CD4-positive, alpha-beta T cell (primary cell): ENCODE measurements at regions of chr4 and their contacts with region 1.

Region 1: DNA sequence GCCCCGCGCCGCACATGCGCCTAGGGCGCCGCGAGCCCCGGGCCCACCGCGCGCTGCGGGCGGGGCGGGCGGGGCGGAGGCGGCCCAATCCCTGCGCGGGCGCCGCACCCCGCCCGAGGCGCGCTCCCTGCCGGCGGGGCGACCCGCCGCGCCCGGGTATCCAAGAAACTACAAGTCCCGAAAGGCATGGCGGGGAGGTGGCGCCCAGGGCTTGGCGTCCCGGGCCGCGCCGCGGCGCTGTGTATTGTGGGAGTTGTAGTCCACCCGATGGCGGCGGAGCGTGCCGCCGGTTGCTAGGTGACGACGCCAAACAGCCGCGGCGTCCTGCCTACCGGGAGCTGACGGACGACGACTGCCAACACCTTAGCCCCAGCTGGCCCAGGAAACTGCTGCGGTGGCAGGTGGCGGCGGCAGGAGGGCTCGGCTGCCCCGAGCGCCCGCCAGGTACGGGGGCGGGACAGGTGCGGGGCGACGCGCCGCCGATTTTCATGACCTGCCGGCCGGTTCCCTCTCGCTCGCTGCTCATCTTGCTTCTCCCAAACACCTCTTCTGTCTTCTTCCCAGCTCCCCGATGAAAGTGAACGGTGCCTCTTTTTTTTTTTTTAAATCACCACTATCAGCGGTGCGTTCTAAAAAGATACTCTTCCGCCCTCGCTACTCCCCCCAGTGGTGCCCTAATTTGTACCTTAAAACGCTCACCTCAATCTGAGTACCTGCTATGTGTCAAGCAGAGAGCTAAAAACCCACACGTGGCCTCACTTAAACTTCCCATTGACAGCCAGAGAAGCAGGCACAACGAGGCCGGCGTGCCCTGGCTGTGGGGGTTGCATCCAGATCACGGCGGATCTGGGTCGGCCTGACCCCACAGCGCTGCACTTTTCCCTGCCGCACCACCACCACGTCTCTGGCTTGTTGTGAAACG is at the start of gene CFAP99:
- DNase-seq: peak; percentile 98 to 99 (median 99)
- ATAC-seq: peak; percentile 86
- H3K4me3 ChIP-seq: peak within 1 kb of the TSS; percentile 75
- H3K4me3 Mint-ChIP-seq: peak within 1 kb of the TSS; percentile 91
- H3K27ac ChIP-seq: peak within 1 kb of the TSS; percentile 43 to 88
- H3K27ac Mint-ChIP-seq: peak within 1 kb of the TSS; percentile 80
- H3K4me1 ChIP-seq: peaks cover 49% of the 10 kb centered on the region
- H3K4me1 Mint-ChIP-seq: peaks cover 39% of the 10 kb centered on the region
- H3K27me3 ChIP-seq: peaks cover 9 to 11% of the 10 kb centered on the region in 2 experiments
- H3K27me3 Mint-ChIP-seq: peaks cover 31% of the 10 kb centered on the region
- CTCF ChIP-seq: peak; percentile 52
- total RNA-seq, gene CFAP99: 0.17 TPM in 1 of 2 experiments, not detected in the other

Region 2: GRCh38 chr4:1712216-1713002 is 706.5 kb before region 1 on chr4 and contains the start of gene SLBP:
- CTCF ChIA-PET with region 1: no interaction called
- POLR2A ChIA-PET with region 1: no interaction called
- intact Hi-C with region 1: loop called in 1 of 2 experiments (anchors 10 kb)
- DNase-seq: peak; percentile 98 to 99 (median 99)
- ATAC-seq: peak; percentile 86
- H3K4me3 ChIP-seq: peak within 1 kb of the TSS; percentile 95
- H3K4me3 Mint-ChIP-seq: peak within 1 kb of the TSS; percentile 89
- H3K27ac ChIP-seq: peak within 1 kb of the TSS; percentile 79 to 91
- H3K27ac Mint-ChIP-seq: peak within 1 kb of the TSS; percentile 93
- H3K4me1 ChIP-seq: peaks cover 60% of the 10 kb centered on the region
- H3K4me1 Mint-ChIP-seq: peaks cover 49% of the 10 kb centered on the region
- H3K27me3 ChIP-seq: no peaks in the 10 kb centered on the region
- H3K27me3 Mint-ChIP-seq: no peaks in the 10 kb centered on the region
- CTCF ChIP-seq: no peak
- total RNA-seq, gene SLBP: 45.8 to 47.6 TPM

Region 3: GRCh38 chr4:2220016-2220630 is 198.8 kb before region 1 on chr4:
- CTCF ChIA-PET with region 1: interaction called, 24 read pairs
- POLR2A ChIA-PET with region 1: interaction called, 6 read pairs
- intact Hi-C with region 1: loop called (anchors 1 to 5 kb)
- DNase-seq: peak; percentile 71 to 88 (median 78)
- ATAC-seq: peak; percentile 98
- H3K4me3 ChIP-seq: no peak overlapping the region
- H3K4me3 Mint-ChIP-seq: no peak overlapping the region
- H3K27ac ChIP-seq: no peak overlapping the region
- H3K27ac Mint-ChIP-seq: no peak overlapping the region
- H3K4me1 ChIP-seq: peaks cover 6% of the 10 kb centered on the region
- H3K4me1 Mint-ChIP-seq: peaks cover 7% of the 10 kb centered on the region
- H3K27me3 ChIP-seq: no peaks in the 10 kb centered on the region
- H3K27me3 Mint-ChIP-seq: no peaks in the 10 kb centered on the region
- CTCF ChIP-seq: peak; percentile 88

Region 4: GRCh38 chr4:2290974-2291704 is 127.8 kb before region 1 on chr4:
- CTCF ChIA-PET with region 1: interaction called, 10 read pairs
- POLR2A ChIA-PET with region 1: interaction called, 11 read pairs
- intact Hi-C with region 1: no loop called
- DNase-seq: peak; percentile 68 to 95 (median 77)
- ATAC-seq: peak; percentile 94
- H3K4me3 ChIP-seq: peak overlapping the region; percentile 19
- H3K4me3 Mint-ChIP-seq: peak overlapping the region; percentile 90
- H3K27ac ChIP-seq: peak overlapping the region; percentile 85 to 91
- H3K27ac Mint-ChIP-seq: peak overlapping the region; percentile 100
- H3K4me1 ChIP-seq: peaks cover 60% of the 10 kb centered on the region
- H3K4me1 Mint-ChIP-seq: peaks cover 56% of the 10 kb centered on the region
- H3K27me3 ChIP-seq: no peaks in the 10 kb centered on the region
- H3K27me3 Mint-ChIP-seq: no peaks in the 10 kb centered on the region
- CTCF ChIP-seq: no peak

Region 5: DNA sequence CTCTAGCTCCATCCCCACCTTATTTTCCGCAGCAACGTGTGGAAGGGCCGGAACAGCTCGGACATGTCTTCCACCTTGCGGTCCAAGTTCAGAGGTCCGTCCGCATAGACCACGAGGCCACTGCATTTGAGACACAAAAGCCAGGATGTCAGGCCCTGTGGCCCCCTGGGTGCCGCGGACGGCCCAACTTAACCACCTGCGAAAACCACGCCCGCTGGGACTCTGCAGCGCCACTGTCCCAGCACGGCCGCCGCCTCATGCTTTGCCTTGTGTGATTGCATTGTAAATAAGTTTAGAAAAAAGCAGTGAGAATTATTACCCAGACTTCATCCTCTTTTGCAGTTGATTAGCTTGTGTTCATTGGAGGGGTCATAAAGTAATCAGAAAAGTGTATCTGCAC is 98.8 kb before region 1 on chr4:
- CTCF ChIA-PET with region 1: no interaction called
- POLR2A ChIA-PET with region 1: no interaction called
- intact Hi-C with region 1: no loop called
- DNase-seq: peak in 2 of 14 experiments; percentile 12 to 37
- ATAC-seq: no peak
- H3K4me3 ChIP-seq: no peak overlapping the region
- H3K4me3 Mint-ChIP-seq: no peak overlapping the region
- H3K27ac ChIP-seq: no peak overlapping the region
- H3K27ac Mint-ChIP-seq: no peak overlapping the region
- H3K4me1 ChIP-seq: no peaks in the 10 kb centered on the region
- H3K4me1 Mint-ChIP-seq: no peaks in the 10 kb centered on the region
- H3K27me3 ChIP-seq: no peaks in the 10 kb centered on the region
- H3K27me3 Mint-ChIP-seq: no peaks in the 10 kb centered on the region
- CTCF ChIP-seq: no peak

Region 6: DNA sequence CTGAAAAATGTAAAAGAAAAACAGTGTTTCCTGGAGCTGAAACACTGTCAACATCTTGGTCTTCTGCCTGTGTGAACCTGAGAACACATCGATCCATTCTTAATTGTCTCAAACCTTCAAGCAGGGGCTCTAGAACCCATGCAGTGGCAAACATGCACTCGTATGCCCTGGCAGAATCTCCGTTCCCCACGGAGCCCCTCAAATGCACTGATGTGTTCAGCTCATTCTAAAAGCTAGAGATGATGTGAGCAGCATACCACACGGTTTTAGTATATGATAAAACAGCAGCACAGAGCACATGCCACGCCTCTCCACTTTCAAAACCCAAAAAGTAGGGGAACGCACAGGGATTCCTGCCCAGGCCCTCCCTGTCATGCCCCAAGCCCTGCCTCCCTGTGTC is 45.4 kb before region 1 on chr4:
- CTCF ChIA-PET with region 1: no interaction called
- POLR2A ChIA-PET with region 1: no interaction called
- intact Hi-C with region 1: no loop called
- DNase-seq: no peak
- ATAC-seq: no peak
- H3K4me3 ChIP-seq: no peak overlapping the region
- H3K4me3 Mint-ChIP-seq: no peak overlapping the region
- H3K27ac ChIP-seq: no peak overlapping the region
- H3K27ac Mint-ChIP-seq: no peak overlapping the region
- H3K4me1 ChIP-seq: no peaks in the 10 kb centered on the region
- H3K4me1 Mint-ChIP-seq: no peaks in the 10 kb centered on the region
- H3K27me3 ChIP-seq: no peaks in the 10 kb centered on the region
- H3K27me3 Mint-ChIP-seq: no peaks in the 10 kb centered on the region
- CTCF ChIP-seq: no peak

Region 7: DNA sequence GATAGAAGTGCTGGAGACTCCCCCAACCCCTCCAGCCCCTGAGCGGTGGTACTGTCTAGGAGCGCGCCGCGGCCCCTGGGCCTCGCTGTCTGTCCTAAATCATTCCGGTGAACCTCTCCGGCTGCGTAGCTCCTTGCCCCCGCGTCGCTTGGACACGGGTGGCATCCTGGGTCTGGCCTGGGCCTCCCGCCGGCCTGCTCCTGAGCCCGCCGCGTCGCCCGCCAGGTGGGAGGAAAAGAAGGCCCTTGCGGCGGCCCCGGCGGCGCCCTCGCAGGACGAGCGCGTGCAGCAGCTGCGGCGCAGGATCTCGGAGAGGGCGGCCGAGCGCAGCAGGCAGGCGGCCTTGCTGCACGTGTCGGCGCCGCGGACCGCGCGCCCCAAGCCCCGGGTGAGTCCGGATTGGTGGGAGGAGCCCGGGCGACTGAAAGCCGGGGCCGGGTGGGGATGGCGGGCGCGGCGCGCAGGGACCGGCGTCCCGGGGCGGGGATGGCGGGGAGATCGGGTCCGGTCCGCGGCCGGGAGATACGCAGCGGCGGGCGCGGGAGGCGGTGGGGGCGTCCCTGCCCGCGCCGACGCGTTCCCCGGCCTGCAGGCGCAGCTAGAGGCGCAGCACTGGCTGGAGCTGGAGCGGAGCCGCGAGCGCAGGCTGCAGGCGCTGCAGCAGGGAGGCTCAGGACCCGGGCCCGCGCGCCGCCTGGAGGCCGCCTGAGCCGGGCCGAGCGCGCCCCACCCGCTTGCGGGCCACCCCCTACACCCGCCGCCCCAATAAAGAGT is 43.5 kb after region 1 on chr4:
- CTCF ChIA-PET with region 1: interaction called, 8 read pairs
- POLR2A ChIA-PET with region 1: interaction called, 3 read pairs
- intact Hi-C with region 1: loop called in 1 of 2 experiments (anchors 2 kb)
- DNase-seq: peak; percentile 40 to 89 (median 60)
- ATAC-seq: peak; percentile 98
- H3K4me3 ChIP-seq: no peak overlapping the region
- H3K4me3 Mint-ChIP-seq: peak overlapping the region; percentile 85
- H3K27ac ChIP-seq: no peak overlapping the region
- H3K27ac Mint-ChIP-seq: no peak overlapping the region
- H3K4me1 ChIP-seq: peaks cover 18% of the 10 kb centered on the region
- H3K4me1 Mint-ChIP-seq: peaks cover 12% of the 10 kb centered on the region
- H3K27me3 ChIP-seq: peaks cover 0 to 5% of the 10 kb centered on the region in 2 experiments
- H3K27me3 Mint-ChIP-seq: no peaks in the 10 kb centered on the region
- CTCF ChIP-seq: peak; percentile 46

Region 8: DNA sequence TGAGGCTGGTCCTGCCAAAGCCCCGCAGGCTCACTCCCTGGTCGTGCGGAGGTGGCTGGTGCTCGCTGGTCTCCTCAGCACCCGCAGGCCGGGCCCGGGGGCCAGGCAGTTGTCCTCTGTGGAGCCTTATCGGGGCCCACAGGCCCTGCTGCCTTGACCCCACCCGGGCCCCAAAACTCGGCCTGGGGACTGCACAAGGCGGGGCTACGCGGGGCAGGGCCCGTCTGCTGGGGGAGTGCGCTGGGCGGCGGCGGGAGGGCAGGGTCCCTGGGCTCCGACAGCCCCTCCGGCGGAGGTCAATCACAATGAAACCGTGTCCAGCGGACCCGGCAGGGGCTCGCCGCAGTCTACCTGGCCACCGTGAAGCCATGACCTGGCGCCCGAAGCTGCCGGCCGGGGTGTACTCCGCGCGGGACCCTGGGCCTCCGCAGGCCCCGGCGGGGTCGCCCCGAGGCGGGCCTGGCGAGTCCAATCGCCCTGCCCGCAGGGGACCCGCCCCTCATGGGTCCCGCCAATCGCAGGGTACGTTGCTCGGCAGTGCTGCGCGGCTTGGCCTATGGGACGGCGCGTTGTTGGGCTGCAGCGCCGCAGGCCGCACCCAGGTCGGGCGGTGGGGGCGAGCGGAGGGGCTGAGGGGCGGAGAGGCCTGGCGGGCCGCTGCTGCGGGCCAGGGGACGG is 424.5 kb after region 1 on chr4 and contains the start of gene ADD1:
- CTCF ChIA-PET with region 1: no interaction called
- POLR2A ChIA-PET with region 1: no interaction called
- intact Hi-C with region 1: loop called in 1 of 2 experiments (anchors 2 kb)
- DNase-seq: peak; percentile 82 to 100 (median 92)
- ATAC-seq: peak; percentile 93
- H3K4me3 ChIP-seq: peak within 1 kb of the TSS; percentile 97
- H3K4me3 Mint-ChIP-seq: peak within 1 kb of the TSS; percentile 98
- H3K27ac ChIP-seq: peak within 1 kb of the TSS; percentile 66 to 85
- H3K27ac Mint-ChIP-seq: peak within 1 kb of the TSS; percentile 92
- H3K4me1 ChIP-seq: peaks cover 49% of the 10 kb centered on the region
- H3K4me1 Mint-ChIP-seq: peaks cover 63% of the 10 kb centered on the region
- H3K27me3 ChIP-seq: no peaks in the 10 kb centered on the region
- H3K27me3 Mint-ChIP-seq: no peaks in the 10 kb centered on the region
- CTCF ChIP-seq: no peak
- total RNA-seq, gene ADD1: 153 TPM